Prostate gland (tissue), 2 donors: ENCODE measurements at regions of chr10 and their contacts with region 1.

Region 1: GRCh38 chr10:118568327-118568848 is 27.1 kb downstream of the PRLHR start:
- DNase-seq: peak; percentile 53
- H3K4me3 ChIP-seq: no peak overlapping the region
- H3K27ac ChIP-seq: no peak overlapping the region
- H3K4me1 ChIP-seq: no peaks in the 10 kb centered on the region
- H3K27me3 ChIP-seq: no peaks in the 10 kb centered on the region
- CTCF ChIP-seq: peak; percentile 69 to 85 (median 72)
- POLR2A ChIP-seq: no peak

Region 2: GRCh38 chr10:118626953-118627352 is 58.6 kb after region 1 on chr10:
- intact Hi-C with region 1: loop called (anchors 5 kb)
- DNase-seq: no peak
- H3K4me3 ChIP-seq: no peak overlapping the region
- H3K27ac ChIP-seq: no peak overlapping the region
- H3K4me1 ChIP-seq: no peaks in the 10 kb centered on the region
- H3K27me3 ChIP-seq: no peaks in the 10 kb centered on the region
- CTCF ChIP-seq: no peak
- POLR2A ChIP-seq: no peak

Region 3: GRCh38 chr10:118669020-118669791 is 100.8 kb after region 1 on chr10:
- intact Hi-C with region 1: loop called (anchors 5 kb)
- DNase-seq: no peak
- H3K4me3 ChIP-seq: no peak overlapping the region
- H3K27ac ChIP-seq: peak overlapping the region in 1 of 2 donors; percentile 32
- H3K4me1 ChIP-seq: no peaks in the 10 kb centered on the region
- H3K27me3 ChIP-seq: no peaks in the 10 kb centered on the region
- CTCF ChIP-seq: no peak
- POLR2A ChIP-seq: no peak

Region 4: DNA sequence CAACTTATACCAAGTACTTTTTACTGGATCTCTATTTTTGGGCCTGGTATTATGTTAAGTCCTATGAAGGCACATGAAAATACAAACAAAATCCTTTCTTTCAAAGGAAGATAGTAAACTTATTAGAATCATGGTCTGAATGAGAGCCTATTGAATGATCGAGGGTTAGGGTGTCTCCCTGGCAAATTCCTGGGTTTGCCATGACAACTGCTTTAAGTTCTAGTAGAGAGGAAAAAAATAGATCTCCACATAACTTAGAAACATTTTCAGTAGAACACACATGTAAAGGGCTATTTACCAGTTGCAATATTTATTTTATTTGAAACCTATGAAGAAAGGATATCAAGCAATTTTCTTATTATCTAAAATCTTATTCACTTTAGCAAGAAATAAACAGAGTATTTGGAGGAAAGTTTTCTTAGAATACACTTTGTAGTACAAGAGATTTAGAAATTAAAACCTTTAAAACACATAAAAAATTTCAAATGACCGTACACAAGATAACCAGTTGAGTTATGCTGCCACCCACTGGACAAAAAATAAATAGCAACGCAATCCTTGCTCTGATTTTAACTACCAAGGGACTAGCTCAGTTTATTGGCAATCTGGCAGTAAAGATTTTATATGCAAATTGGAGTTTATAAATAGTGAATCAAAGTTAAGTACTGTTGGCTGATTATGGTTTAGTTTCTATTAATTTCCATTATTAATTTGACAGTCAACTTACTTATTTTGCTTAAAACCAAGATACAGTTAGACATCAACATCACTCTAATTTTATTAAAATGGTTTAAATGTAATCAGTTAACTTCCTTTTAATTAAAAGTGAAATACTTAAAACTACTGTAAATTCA is 152.5 kb after region 1 on chr10:
- intact Hi-C with region 1: loop called (anchors 2 kb)
- DNase-seq: peak; percentile 57
- H3K4me3 ChIP-seq: no peak overlapping the region
- H3K27ac ChIP-seq: no peak overlapping the region
- H3K4me1 ChIP-seq: no peaks in the 10 kb centered on the region
- H3K27me3 ChIP-seq: no peaks in the 10 kb centered on the region
- CTCF ChIP-seq: peak; percentile 59 to 87 (median 82)
- POLR2A ChIP-seq: no peak

Region 5: GRCh38 chr10:118775478-118775877 is 207.1 kb after region 1 on chr10:
- intact Hi-C with region 1: no loop called
- DNase-seq: no peak
- H3K4me3 ChIP-seq: no peak overlapping the region
- H3K27ac ChIP-seq: no peak overlapping the region
- H3K4me1 ChIP-seq: no peaks in the 10 kb centered on the region
- H3K27me3 ChIP-seq: no peaks in the 10 kb centered on the region
- CTCF ChIP-seq: no peak
- POLR2A ChIP-seq: no peak

Region 6: GRCh38 chr10:118800920-118801319 is 232.5 kb after region 1 on chr10:
- intact Hi-C with region 1: loop called (anchors 5 kb)
- DNase-seq: peak; percentile 24
- H3K4me3 ChIP-seq: no peak overlapping the region
- H3K27ac ChIP-seq: no peak overlapping the region
- H3K4me1 ChIP-seq: no peaks in the 10 kb centered on the region
- H3K27me3 ChIP-seq: no peaks in the 10 kb centered on the region
- CTCF ChIP-seq: peak in 3 of 4 experiments; percentile 38 to 60 (median 58)
- POLR2A ChIP-seq: no peak

Region 7: GRCh38 chr10:119028900-119029612 is 460.7 kb after region 1 on chr10:
- intact Hi-C with region 1: loop called (anchors 5 kb)
- DNase-seq: peak; percentile 87
- H3K4me3 ChIP-seq: peak overlapping the region; percentile 46 to 55
- H3K27ac ChIP-seq: peak overlapping the region; percentile 53 to 57
- H3K4me1 ChIP-seq: peaks cover 6% of the 10 kb centered on the region
- H3K27me3 ChIP-seq: no peaks in the 10 kb centered on the region
- CTCF ChIP-seq: peak in 2 of 4 experiments; percentile 46 to 51
- POLR2A ChIP-seq: no peak